ENCODE measurements at regions of chr19 and their contacts with region 1.

Region 1: DNA sequence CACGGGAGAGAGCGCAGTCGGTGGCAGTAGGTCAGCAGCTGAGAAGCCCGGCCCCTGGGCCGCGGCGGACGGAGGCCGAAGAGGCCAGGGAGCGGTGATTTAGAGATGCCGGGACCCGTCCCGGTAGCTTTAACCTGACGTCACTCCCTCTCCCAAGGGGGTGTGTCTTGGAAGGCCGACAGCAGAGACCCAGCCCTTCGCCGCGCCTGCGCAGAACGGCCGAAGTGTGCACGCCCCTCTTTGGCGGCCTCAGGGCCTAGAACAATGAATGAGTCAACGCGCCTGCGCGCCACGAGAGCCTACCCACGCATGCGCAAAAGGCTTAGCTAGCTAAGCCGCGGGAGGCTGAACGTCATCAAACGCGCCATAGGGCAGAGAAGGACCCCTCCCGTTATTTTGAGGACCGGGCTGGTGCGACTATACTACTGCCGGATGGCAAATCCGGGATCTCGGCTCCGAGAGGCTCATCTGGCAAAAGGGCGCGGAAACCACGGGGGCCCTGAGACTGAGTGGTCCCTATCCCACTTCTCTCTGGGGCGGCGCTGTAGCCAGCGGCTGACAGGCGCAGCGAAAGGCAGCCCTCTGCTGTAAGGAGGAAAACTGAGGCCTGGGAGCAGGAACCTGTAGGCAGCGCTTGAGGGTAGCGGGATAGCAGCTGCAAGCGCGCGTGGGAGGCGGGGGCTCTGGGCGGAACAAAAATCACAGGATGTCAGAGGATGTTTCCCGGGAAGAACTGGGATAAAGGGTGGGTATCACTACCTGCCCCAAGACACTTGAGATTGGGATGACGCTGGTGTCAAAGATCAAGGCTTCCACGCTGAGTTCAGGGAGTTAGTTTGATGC is at the starts of genes IRGQ and ZNF576:
- H3K4me3 Mint-ChIP-seq: peak within 1 kb of the TSS; percentile 90
- H3K27ac Mint-ChIP-seq: peak within 1 kb of the TSS; percentile 98
- H3K4me1 Mint-ChIP-seq: peaks cover 41% of the 10 kb centered on the region
- H3K27me3 Mint-ChIP-seq: no peaks in the 10 kb centered on the region

Region 2: GRCh38 chr19:43446746-43447489 is 149.3 kb before region 1 on chr19:
- intact Hi-C with region 1: loop called (anchors 10 kb)
- H3K4me3 Mint-ChIP-seq: no peak overlapping the region
- H3K27ac Mint-ChIP-seq: no peak overlapping the region
- H3K4me1 Mint-ChIP-seq: peaks cover 79% of the 10 kb centered on the region
- H3K27me3 Mint-ChIP-seq: peaks cover 10% of the 10 kb centered on the region

Region 3: DNA sequence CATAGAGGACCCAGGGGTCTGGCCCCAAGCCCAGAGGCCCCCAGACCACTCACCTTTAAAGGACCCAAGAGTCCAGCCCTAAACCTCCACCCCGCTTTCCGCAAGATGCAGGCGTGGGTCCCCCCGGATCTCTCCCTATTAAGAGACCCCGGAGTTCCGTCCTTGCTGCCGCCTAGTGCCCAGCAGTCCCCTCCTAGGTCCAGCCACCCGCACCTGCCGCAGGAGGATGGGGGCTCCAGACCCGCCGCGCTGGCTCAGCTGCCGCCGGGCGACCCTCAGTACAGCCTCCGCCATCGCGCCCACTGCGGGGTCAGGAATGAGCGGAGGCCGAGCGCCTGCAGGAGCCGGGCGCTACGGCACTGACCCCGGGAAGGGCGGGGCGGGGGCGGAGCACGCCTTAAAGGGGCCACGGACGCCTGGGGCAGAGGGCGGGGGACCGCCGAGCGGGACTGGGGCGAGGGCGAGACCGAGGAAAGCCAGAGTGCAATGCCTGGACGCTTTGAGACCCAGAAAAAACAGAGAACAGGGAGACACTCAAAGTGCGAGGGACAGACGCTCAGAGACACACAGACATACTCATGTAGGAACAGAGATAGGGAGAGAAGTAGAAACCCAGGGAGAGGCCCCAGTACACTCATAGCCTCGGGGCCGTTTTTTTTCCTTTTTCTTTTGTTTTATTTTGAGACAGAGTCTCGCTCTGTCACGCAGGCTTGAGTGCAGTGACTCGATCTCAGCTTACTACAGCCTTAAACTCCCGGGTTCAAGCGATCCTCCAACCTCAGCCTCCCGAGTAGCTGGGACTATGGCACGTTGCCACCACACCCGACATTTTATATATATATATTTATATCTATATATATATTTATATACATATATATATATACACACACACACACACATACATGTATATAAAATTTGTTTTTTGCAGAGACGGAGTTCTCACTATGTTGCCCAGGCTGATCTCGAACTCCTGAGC is 69.0 kb before region 1 on chr19 and contains the start of gene ETHE1:
- intact Hi-C with region 1: loop called (anchors 2 kb)
- H3K4me3 Mint-ChIP-seq: peak within 1 kb of the TSS; percentile 96
- H3K27ac Mint-ChIP-seq: peak within 1 kb of the TSS; percentile 91
- H3K4me1 Mint-ChIP-seq: peaks cover 32% of the 10 kb centered on the region
- H3K27me3 Mint-ChIP-seq: no peaks in the 10 kb centered on the region

Region 4: DNA sequence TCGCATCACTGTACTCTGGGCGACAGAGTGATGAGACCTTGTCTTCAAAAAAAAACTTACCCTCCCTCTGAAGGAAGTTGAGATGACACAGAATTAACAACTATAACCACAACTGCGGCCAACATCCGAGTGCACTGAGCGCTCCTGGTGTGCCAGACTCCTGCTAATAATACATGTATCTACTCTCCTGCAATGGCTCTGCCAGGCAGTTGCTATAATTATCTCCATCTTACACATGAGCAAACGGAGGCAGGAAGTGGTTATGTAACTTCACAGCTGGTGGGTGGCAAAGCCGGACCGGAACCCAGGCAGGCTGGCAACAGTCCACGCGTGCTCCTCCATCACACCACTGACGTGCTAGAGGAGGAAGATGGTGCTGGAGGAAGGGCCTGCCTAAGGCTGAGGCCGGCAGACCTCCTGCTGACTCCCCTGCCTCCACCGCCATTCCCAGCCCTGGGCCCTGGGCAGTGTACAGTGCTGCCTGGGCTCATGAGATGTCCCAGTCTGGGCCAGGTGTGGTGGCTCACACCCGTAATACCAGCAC is 33.5 kb before region 1 on chr19:
- intact Hi-C with region 1: loop called (anchors 5 kb)
- H3K4me3 Mint-ChIP-seq: peak overlapping the region; percentile 37
- H3K27ac Mint-ChIP-seq: peak overlapping the region; percentile 71
- H3K4me1 Mint-ChIP-seq: peaks cover 28% of the 10 kb centered on the region
- H3K27me3 Mint-ChIP-seq: no peaks in the 10 kb centered on the region

Region 5: DNA sequence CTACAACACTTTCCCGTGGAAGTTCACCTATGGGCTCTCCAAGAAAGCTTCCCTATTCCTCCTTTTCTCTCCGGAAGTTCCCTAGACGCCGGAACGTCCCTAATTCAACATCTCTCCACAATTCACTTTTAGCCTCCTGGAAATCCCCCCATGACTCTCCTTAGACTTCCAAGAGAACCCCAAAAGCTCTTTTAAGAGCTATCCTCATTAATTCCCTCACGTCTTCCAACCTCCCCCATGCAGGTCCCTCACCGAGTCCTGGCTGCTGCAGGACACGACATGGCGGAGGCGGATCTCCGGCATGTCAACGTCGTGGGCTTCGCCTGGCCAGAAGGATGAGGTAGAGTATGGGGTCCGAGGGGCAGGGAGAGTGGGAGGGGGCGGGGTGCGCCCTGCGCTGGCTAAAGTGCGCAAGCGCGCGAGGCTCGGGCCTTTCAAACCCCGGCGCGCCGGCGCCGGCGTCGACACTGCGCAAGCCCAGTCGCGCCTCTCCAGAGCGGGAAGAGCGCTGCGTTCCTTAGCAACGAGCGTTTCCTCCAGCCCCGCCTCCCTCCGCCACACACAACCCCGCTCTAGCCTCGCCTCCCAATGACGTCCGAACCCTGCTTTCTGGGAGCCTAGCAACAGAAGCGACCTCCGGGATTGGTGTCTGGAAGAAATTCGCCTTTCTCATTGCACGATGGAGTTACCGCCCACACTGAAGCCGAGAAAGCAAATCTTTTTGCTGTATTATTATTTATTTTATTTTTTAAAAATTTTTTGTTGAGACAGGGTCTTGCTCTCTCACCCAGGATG is 20.9 kb before region 1 on chr19 and contains the starts of genes PINLYP and XRCC1:
- intact Hi-C with region 1: loop called (anchors 1 kb)
- H3K4me3 Mint-ChIP-seq: peak within 1 kb of the TSS; percentile 94
- H3K27ac Mint-ChIP-seq: peak within 1 kb of the TSS; percentile 94
- H3K4me1 Mint-ChIP-seq: peaks cover 44% of the 10 kb centered on the region
- H3K27me3 Mint-ChIP-seq: no peaks in the 10 kb centered on the region

Region 6: GRCh38 chr19:43606569-43607229 is 10.5 kb after region 1 on chr19:
- intact Hi-C with region 1: no loop called
- H3K4me3 Mint-ChIP-seq: no peak overlapping the region
- H3K27ac Mint-ChIP-seq: no peak overlapping the region
- H3K4me1 Mint-ChIP-seq: peaks cover 6% of the 10 kb centered on the region
- H3K27me3 Mint-ChIP-seq: no peaks in the 10 kb centered on the region

Region 7: GRCh38 chr19:43619262-43620060 is 23.2 kb after region 1 on chr19 and contains the start of gene ZNF428:
- intact Hi-C with region 1: loop called (anchors 1 kb)
- H3K4me3 Mint-ChIP-seq: peak within 1 kb of the TSS; percentile 96
- H3K27ac Mint-ChIP-seq: peak within 1 kb of the TSS; percentile 97
- H3K4me1 Mint-ChIP-seq: peaks cover 20% of the 10 kb centered on the region
- H3K27me3 Mint-ChIP-seq: peaks cover 2% of the 10 kb centered on the region

Region 8: GRCh38 chr19:43839139-43839538 is 242.9 kb after region 1 on chr19:
- intact Hi-C with region 1: no loop called
- H3K4me3 Mint-ChIP-seq: no peak overlapping the region
- H3K27ac Mint-ChIP-seq: no peak overlapping the region
- H3K4me1 Mint-ChIP-seq: no peaks in the 10 kb centered on the region
- H3K27me3 Mint-ChIP-seq: no peaks in the 10 kb centered on the region